GM12878 (cell line): ENCODE measurements at regions of chr1 and their contacts with region 1.

Region 1: GRCh38 chr1:113759333-113760101 is at the start of gene PHTF1:
- DNase-seq: no peak
- ATAC-seq: peak; percentile 91
- H3K4me3 ChIP-seq: peak within 1 kb of the TSS; percentile 85
- H3K27ac ChIP-seq: peak within 1 kb of the TSS; percentile 94
- H3K4me1 ChIP-seq: no peaks in the 10 kb centered on the region; the same call in 1 of the 2 replicates
- H3K27me3 ChIP-seq: no peaks in the 10 kb centered on the region
- CTCF ChIP-seq: no peak
- EP300 ChIP-seq: no peak
- POLR2A ChIP-seq: peak; percentile 89
- RAD21 ChIP-seq: no peak
- polyA plus RNA-seq, gene PHTF1: 7.8 to 12.6 TPM

Region 2: DNA sequence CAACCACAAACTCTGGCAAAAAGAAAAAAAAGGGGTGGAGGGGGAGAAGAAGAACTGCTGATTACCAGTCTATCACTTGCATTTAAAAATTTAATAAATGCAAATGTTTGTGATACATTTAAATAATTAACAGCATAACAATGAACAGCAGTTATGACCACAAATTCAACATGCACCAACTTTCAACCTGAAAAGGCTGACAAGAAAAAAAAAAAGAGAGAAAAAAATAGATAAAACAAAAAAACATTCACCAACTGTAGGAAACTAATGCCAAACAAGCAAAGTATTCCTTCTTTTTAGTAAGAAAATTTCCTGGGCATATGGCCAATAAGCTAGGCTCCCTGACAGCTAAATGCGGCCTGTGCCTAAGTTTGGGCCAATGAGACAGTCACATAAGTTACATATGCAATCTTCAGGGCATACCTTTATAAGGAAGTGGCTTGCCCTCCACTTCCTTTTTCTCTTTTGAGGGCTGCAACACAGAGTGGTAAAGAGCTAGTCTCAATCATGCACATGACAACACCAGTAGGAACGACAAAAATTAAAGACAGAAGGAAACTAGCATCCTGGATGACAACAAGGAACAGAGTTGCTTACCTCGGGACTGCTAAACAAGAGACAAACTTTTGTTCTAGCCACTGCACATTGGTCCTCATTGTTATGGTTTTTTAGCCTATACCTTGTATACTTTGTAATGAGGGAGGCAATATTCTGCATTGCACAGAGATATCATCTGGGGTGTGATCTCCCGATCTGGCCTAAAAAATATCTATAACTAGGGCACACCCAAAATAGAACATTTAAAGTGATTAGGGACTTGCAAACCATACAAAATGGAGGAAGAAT is 24.0 kb after region 1 on chr1:
- CTCF ChIA-PET with region 1: interaction called, 20 read pairs
- POLR2A ChIA-PET with region 1: interaction called, 36 read pairs
- RAD21 ChIA-PET with region 1: interaction called, 35 read pairs
- SMC1A ChIA-PET with region 1: interaction called, 66 read pairs
- in situ Hi-C with region 1: no loop called
- intact Hi-C with region 1: no loop called
- DNase-seq: peak; percentile 55
- ATAC-seq: peak; percentile 92
- H3K4me3 ChIP-seq: peak overlapping the region; percentile 19; the same call in 1 of the 2 replicates
- H3K27ac ChIP-seq: peak overlapping the region; percentile 51
- H3K4me1 ChIP-seq: peaks cover 36% of the 10 kb centered on the region
- H3K27me3 ChIP-seq: no peaks in the 10 kb centered on the region
- CTCF ChIP-seq: no peak
- EP300 ChIP-seq: 0 out of 4 replicates have a peak, but pooled peaks of 1 of the 2 experiments have one; percentile 4
- POLR2A ChIP-seq: no peak
- RAD21 ChIP-seq: no peak

Region 3: GRCh38 chr1:113804421-113805255 is 45.1 kb after region 1 on chr1:
- CTCF ChIA-PET with region 1: interaction called, 7 read pairs
- POLR2A ChIA-PET with region 1: interaction called, 7 read pairs
- RAD21 ChIA-PET with region 1: interaction called, 9 read pairs
- SMC1A ChIA-PET with region 1: interaction called, 17 read pairs
- in situ Hi-C with region 1: no loop called
- intact Hi-C with region 1: no loop called
- DNase-seq: no peak
- ATAC-seq: peak; percentile 35
- H3K4me3 ChIP-seq: 0 out of 2 replicates have a peak overlapping the region, but pooled peaks have one; percentile 25
- H3K27ac ChIP-seq: no peak overlapping the region
- H3K4me1 ChIP-seq: peaks cover 14% of the 10 kb centered on the region
- H3K27me3 ChIP-seq: no peaks in the 10 kb centered on the region
- CTCF ChIP-seq: no peak
- EP300 ChIP-seq: no peak
- POLR2A ChIP-seq: no peak
- RAD21 ChIP-seq: no peak

Region 4: GRCh38 chr1:113871597-113872113 is 112.1 kb after region 1 on chr1 and contains the start of gene PTPN22:
- CTCF ChIA-PET with region 1: interaction called, 3 read pairs
- POLR2A ChIA-PET with region 1: interaction called, 9 read pairs
- RAD21 ChIA-PET with region 1: interaction called, 3 read pairs
- SMC1A ChIA-PET with region 1: interaction called, 17 read pairs
- in situ Hi-C with region 1: no loop called
- intact Hi-C with region 1: no loop called
- DNase-seq: peak; percentile 90
- ATAC-seq: peak; percentile 87
- H3K4me3 ChIP-seq: peak within 1 kb of the TSS; percentile 89
- H3K27ac ChIP-seq: peak within 1 kb of the TSS; percentile 79
- H3K4me1 ChIP-seq: peaks cover 47% of the 10 kb centered on the region
- H3K27me3 ChIP-seq: no peaks in the 10 kb centered on the region
- CTCF ChIP-seq: no peak
- EP300 ChIP-seq: peak in 1 of 2 experiments; percentile 86; a peak in 3 of 4 replicates
- POLR2A ChIP-seq: peak; percentile 90
- RAD21 ChIP-seq: no peak
- polyA plus RNA-seq, gene PTPN22: 30.3 to 32.3 TPM